MCF 10A (cell line): ENCODE measurements at regions of chr3 and their contacts with region 1.

Region 1: DNA sequence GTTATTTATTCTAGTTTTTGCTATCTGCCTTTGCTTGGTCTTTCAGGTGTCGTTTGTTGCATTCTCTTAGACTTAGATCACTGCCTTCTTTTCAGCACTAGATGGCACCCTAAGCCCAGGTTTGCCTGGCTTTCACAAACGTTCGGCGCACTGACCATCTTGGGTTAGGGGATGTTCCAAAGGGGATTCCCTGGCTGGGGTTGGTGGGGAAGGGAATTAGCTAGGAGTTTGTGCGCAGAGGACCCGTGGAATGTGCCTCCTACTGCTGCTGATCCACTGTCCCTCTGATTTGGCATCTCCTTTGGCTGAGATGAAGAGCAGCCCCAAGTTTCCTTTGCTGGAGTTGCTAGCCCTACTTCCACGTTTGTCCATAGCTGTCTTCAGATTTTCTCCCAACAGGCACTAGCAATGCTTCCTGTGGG is 33.9 kb downstream of the PFN2 start:
- DNase-seq: peak; percentile 69
- H3K4me3 Mint-ChIP-seq: peak overlapping the region; percentile 19
- H3K27ac Mint-ChIP-seq: no peak overlapping the region
- H3K4me1 Mint-ChIP-seq: peaks cover 28% of the 10 kb centered on the region
- H3K27me3 Mint-ChIP-seq: no peaks in the 10 kb centered on the region
- CTCF ChIP-seq: peak; percentile 81

Region 2: DNA sequence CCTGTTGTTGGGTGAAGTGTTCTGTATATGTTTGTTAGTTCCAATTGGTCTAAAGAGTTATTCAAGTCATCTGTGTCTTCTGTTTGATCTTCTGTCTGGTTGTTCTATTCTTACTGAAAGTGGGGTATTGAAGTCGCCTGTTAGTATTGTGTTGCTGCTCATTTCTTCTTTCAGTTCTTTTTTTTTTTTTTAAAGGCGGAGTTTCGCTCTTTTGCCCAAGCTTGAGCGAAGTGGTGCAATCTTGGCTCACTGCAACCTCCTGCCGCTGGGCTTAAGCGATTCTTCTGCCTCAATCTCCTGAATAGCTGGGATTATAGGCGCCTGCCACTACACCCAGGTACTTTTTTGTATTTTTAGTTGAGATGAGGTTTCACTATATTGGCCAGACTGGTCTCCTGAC is 10.4 kb after region 1 on chr3:
- CTCF ChIA-PET with region 1: interaction called, 21 read pairs
- POLR2A ChIA-PET with region 1: interaction called, 3 read pairs
- intact Hi-C with region 1: no loop called
- DNase-seq: no peak
- H3K4me3 Mint-ChIP-seq: no peak overlapping the region
- H3K27ac Mint-ChIP-seq: no peak overlapping the region
- H3K4me1 Mint-ChIP-seq: no peaks in the 10 kb centered on the region
- H3K27me3 Mint-ChIP-seq: no peaks in the 10 kb centered on the region
- CTCF ChIP-seq: no peak

Region 3: GRCh38 chr3:149964291-149964690 is 27.5 kb after region 1 on chr3:
- CTCF ChIA-PET with region 1: interaction called, 21 read pairs
- POLR2A ChIA-PET with region 1: interaction called, 3 read pairs
- intact Hi-C with region 1: loop called (anchors 2 kb)
- DNase-seq: no peak
- H3K4me3 Mint-ChIP-seq: no peak overlapping the region
- H3K27ac Mint-ChIP-seq: peak overlapping the region; percentile 28
- H3K4me1 Mint-ChIP-seq: peaks cover 18% of the 10 kb centered on the region
- H3K27me3 Mint-ChIP-seq: no peaks in the 10 kb centered on the region
- CTCF ChIP-seq: no peak

Region 4: GRCh38 chr3:150114873-150115540 is 178.2 kb after region 1 on chr3:
- CTCF ChIA-PET with region 1: no interaction called
- POLR2A ChIA-PET with region 1: no interaction called
- intact Hi-C with region 1: no loop called
- DNase-seq: peak; percentile 16
- H3K4me3 Mint-ChIP-seq: no peak overlapping the region
- H3K27ac Mint-ChIP-seq: no peak overlapping the region
- H3K4me1 Mint-ChIP-seq: peaks cover 6% of the 10 kb centered on the region
- H3K27me3 Mint-ChIP-seq: no peaks in the 10 kb centered on the region
- CTCF ChIP-seq: no peak

Region 5: DNA sequence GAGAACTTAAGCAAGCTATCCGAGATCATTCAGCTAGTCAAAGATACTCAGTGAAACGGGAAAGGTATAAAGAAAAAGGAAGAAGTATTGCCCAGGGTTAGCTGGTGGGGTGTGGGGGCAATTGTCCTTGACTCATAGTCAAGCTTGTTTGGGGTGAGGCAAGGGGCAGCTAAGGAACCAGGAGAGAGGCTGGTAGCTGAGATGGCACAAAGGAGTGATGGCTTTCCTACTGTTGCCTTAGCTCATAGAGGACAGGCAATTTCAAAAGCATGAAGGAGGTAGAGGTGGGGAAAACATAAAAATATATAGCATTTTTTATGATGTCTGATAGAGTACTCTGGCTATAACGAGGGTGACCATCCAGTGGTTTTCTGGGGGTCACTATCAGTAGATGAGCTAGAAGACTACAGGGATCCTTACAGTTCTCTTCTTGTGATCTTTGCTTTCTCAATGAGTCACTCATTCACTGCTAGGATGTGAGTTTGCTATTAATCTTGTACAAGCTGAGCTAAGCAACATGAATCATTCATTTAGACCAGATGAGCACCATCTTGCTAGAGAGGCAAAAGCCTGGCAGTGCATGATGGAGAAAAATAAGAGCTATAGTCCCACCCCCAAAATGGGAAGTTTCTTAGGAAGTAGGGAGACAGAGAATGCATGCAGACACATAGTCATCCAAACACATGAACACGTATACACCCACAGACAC is 241.0 kb after region 1 on chr3:
- CTCF ChIA-PET with region 1: interaction called, 20 read pairs
- POLR2A ChIA-PET with region 1: no interaction called
- intact Hi-C with region 1: no loop called
- DNase-seq: peak; percentile 26
- H3K4me3 Mint-ChIP-seq: no peak overlapping the region
- H3K27ac Mint-ChIP-seq: no peak overlapping the region
- H3K4me1 Mint-ChIP-seq: peaks cover 17% of the 10 kb centered on the region
- H3K27me3 Mint-ChIP-seq: no peaks in the 10 kb centered on the region
- CTCF ChIP-seq: no peak

Region 6: GRCh38 chr3:150216041-150216811 is 279.4 kb after region 1 on chr3:
- CTCF ChIA-PET with region 1: interaction called, 33 read pairs
- POLR2A ChIA-PET with region 1: interaction called, 5 read pairs
- intact Hi-C with region 1: loop called (anchors 1 kb)
- DNase-seq: peak; percentile 96
- H3K4me3 Mint-ChIP-seq: peak overlapping the region; percentile 22
- H3K27ac Mint-ChIP-seq: no peak overlapping the region
- H3K4me1 Mint-ChIP-seq: peaks cover 14% of the 10 kb centered on the region
- H3K27me3 Mint-ChIP-seq: peaks cover 2% of the 10 kb centered on the region
- CTCF ChIP-seq: no peak